ENCODE measurements at regions of chr6 and their contacts with region 1.

Region 1: DNA sequence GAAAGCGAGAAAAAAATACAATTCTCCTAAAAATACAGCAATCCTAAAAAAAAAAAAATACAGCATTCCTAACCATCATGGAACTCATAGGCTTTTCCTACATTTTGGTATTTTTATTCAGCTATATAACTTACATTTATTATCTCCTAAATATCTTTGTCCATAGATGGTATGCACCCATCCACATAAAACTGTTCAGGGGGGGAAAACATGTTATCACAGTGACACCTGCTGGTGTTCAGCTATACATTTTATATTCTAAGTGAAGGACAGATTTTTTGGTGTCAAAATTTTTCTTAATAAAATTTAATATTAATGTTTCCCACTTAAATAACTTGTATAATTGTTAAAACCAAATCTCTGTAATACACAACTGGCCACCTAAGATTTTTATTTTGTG is 58.0 kb downstream of the BLOC1S5 start:
- DNase-seq: peak; percentile 80
- H3K4me3 ChIP-seq: no peak overlapping the region
- H3K27ac ChIP-seq: no peak overlapping the region
- H3K4me1 ChIP-seq: peaks cover 51% of the 10 kb centered on the region
- H3K27me3 ChIP-seq: no peaks in the 10 kb centered on the region
- CTCF ChIP-seq: peak; percentile 23 to 26
- POLR2A ChIP-seq: no peak

Region 2: GRCh38 chr6:7719364-7719850 is 286.8 kb before region 1 on chr6:
- CTCF ChIA-PET with region 1: interaction called, 140 read pairs
- POLR2A ChIA-PET with region 1: no interaction called
- dilution Hi-C with region 1: no loop called
- intact Hi-C with region 1: loop called (anchors 1 kb)
- DNase-seq: no peak
- H3K4me3 ChIP-seq: no peak overlapping the region
- H3K27ac ChIP-seq: no peak overlapping the region
- H3K4me1 ChIP-seq: peaks cover 10% of the 10 kb centered on the region
- H3K27me3 ChIP-seq: no peaks in the 10 kb centered on the region
- CTCF ChIP-seq: no peak
- POLR2A ChIP-seq: no peak

Region 3: GRCh38 chr6:7887278-7887991 is 118.8 kb before region 1 on chr6:
- CTCF ChIA-PET with region 1: interaction called, 26 read pairs
- POLR2A ChIA-PET with region 1: no interaction called
- dilution Hi-C with region 1: loop called (anchors 25 kb)
- intact Hi-C with region 1: no loop called
- DNase-seq: peak; percentile 64
- H3K4me3 ChIP-seq: no peak overlapping the region
- H3K27ac ChIP-seq: peak overlapping the region; percentile 36
- H3K4me1 ChIP-seq: peaks cover 11% of the 10 kb centered on the region
- H3K27me3 ChIP-seq: no peaks in the 10 kb centered on the region
- CTCF ChIP-seq: no peak
- POLR2A ChIP-seq: peak; percentile 83

Region 4: DNA sequence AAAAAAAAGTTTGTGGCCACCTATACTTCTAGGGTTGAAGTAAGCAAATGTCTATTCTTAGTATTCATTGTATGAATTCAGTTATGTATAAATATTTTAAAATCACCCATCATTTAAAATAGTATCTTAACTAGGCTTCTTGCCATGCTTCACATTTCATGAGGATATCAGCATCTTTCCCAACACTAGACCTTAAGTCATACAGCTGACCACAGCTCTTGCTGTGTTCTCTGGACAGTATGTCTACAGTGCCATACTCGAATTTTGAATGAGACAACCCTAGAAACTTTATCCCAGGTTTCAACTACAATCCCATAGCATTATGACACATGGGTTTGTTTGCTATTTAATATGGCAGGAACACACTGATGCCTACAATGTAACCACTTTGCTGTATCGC is 100.8 kb before region 1 on chr6:
- CTCF ChIA-PET with region 1: interaction called, 22 read pairs
- POLR2A ChIA-PET with region 1: interaction called, 22 read pairs
- dilution Hi-C with region 1: no loop called
- intact Hi-C with region 1: no loop called
- DNase-seq: peak; percentile 26
- H3K4me3 ChIP-seq: peak overlapping the region in 1 of 3 experiments; percentile 43
- H3K27ac ChIP-seq: peak overlapping the region; percentile 94
- H3K4me1 ChIP-seq: peaks cover 75% of the 10 kb centered on the region
- H3K27me3 ChIP-seq: no peaks in the 10 kb centered on the region
- CTCF ChIP-seq: no peak
- POLR2A ChIP-seq: no peak

Region 5: GRCh38 chr6:7974938-7975763 is 31.1 kb before region 1 on chr6:
- CTCF ChIA-PET with region 1: interaction called, 14 read pairs
- POLR2A ChIA-PET with region 1: no interaction called
- dilution Hi-C with region 1: no loop called
- intact Hi-C with region 1: loop called (anchors 1 kb)
- DNase-seq: peak; percentile 100
- H3K4me3 ChIP-seq: no peak overlapping the region
- H3K27ac ChIP-seq: peak overlapping the region; percentile 85
- H3K4me1 ChIP-seq: peaks cover 36% of the 10 kb centered on the region
- H3K27me3 ChIP-seq: no peaks in the 10 kb centered on the region
- CTCF ChIP-seq: no peak
- POLR2A ChIP-seq: peak; percentile 67

Region 6: GRCh38 chr6:8219352-8219943 is 213.2 kb after region 1 on chr6:
- CTCF ChIA-PET with region 1: interaction called, 5 read pairs
- POLR2A ChIA-PET with region 1: no interaction called
- dilution Hi-C with region 1: no loop called
- intact Hi-C with region 1: loop called (anchors 5 kb)
- DNase-seq: peak; percentile 62
- H3K4me3 ChIP-seq: no peak overlapping the region
- H3K27ac ChIP-seq: no peak overlapping the region
- H3K4me1 ChIP-seq: no peaks in the 10 kb centered on the region
- H3K27me3 ChIP-seq: peaks cover 0 to 8% of the 10 kb centered on the region in 2 experiments
- CTCF ChIP-seq: peak; percentile 57 to 62
- POLR2A ChIP-seq: no peak